ENCODE measurements at regions of chrX and their contacts with region 1.

Region 1: GRCh38 chrX:120664081-120664480 is 34.2 kb upstream of the C1GALT1C1 start:
- DNase-seq: no peak
- H3K4me3 ChIP-seq: no peak overlapping the region
- H3K27ac ChIP-seq: no peak overlapping the region
- H3K27me3 ChIP-seq: peaks cover 0 to 48% (median 4%) of the 10 kb centered on the region in 45 donors
- CTCF ChIP-seq: peak in 47 of 56 donors; percentile 17 to 60 (median 35)

Region 2: GRCh38 chrX:120514236-120514635 is 149.8 kb before region 1 on chrX:
- intact Hi-C with region 1: loop called in 1 of 2 experiments (anchors 10 kb)
- DNase-seq: no peak
- H3K4me3 ChIP-seq: no peak overlapping the region
- H3K27ac ChIP-seq: no peak overlapping the region
- H3K27me3 ChIP-seq: peaks cover 0 to 45% (median 6%) of the 10 kb centered on the region in 45 donors
- CTCF ChIP-seq: peak in 19 of 56 donors; percentile 6 to 34 (median 18)

Region 3: DNA sequence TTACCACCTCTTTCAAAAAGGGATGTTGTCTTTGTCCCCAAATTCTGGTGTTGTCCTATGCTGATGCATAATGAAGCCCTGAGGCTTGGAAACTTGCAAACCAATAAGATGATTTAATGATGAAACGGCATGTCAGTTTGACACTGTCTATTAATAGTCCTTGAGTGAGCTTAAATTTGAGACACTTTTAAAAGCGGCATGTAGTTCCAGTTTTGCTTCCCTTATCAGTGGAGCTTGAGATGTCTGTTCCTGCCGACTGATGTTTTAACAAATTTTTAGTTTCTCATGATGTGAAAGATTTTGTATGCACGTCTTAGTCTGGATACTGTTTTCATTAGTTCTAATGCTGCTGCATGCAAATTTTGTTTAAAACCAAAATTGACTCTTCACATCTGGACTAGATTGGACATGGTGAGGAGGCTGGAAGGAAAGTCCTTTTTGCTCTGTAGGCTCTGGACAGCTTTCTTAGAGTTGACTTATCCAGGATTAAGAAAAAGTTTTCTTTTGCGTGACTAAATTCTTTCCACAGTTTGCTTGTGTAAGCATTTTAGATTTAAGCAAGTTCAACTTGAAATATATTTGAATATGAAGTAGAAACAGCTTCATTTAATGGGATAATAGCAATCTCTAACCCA is 46.0 kb before region 1 on chrX:
- intact Hi-C with region 1: no loop called
- DNase-seq: no peak
- H3K4me3 ChIP-seq: no peak overlapping the region
- H3K27ac ChIP-seq: no peak overlapping the region
- H3K27me3 ChIP-seq: peaks cover 0 to 18% (median 0%) of the 10 kb centered on the region in 45 donors
- CTCF ChIP-seq: no peak

Measured in dorsolateral prefrontal cortex (tissue), 120 donors.